ENCODE measurements at regions of chr11 and their contacts with region 1.

Region 1: DNA sequence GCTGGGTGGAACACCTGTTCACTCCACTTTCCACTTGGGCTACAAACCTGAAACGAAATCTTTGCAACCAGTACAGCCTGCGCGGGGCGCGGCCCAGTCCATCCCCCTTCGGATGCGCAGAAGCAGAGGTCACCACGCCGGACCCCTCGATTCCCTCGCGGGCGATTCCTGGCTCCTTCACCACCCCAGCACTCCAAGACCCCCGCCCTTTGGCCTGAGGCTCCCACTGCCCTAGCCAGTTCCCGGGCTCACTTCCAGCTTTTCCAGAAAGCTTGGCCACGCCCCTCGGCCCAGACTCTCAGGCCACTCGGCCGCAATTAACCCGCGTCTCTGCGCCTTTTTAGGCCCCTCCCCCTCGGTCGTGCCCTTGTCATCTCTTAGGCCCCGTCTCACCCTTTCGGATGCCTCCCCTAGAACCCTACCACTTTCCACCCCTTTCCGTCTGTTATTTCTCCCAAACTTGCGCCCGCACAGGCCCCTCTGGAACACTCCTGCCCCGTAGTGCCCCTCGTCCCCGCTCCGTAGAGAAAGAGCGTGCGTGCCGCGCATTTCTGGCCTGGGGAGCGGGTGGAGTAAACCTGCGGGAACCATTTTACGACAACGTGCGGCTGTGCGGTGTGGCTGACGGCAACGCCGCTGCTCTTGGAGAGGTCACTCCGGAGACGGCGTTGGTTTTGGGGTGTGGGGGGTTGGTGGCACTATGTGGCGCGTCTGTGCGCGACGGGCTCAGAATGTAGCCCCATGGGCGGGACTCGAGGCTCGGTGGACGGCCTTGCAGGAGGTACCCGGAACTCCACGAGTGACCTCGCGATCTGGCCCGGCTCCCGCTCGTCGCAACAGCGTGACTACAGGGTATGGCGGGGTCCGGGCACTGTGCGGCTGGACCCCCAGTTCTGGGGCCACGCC is at the start of gene DLAT:
- DNase-seq: peak; percentile 92
- H3K4me3 Mint-ChIP-seq: peak within 1 kb of the TSS; percentile 98
- H3K27ac Mint-ChIP-seq: peak within 1 kb of the TSS; percentile 98
- H3K4me1 Mint-ChIP-seq: peaks cover 21% of the 10 kb centered on the region
- H3K27me3 Mint-ChIP-seq: no peaks in the 10 kb centered on the region
- total RNA-seq, gene DLAT: 36.4 to 39.0 TPM

Region 2: DNA sequence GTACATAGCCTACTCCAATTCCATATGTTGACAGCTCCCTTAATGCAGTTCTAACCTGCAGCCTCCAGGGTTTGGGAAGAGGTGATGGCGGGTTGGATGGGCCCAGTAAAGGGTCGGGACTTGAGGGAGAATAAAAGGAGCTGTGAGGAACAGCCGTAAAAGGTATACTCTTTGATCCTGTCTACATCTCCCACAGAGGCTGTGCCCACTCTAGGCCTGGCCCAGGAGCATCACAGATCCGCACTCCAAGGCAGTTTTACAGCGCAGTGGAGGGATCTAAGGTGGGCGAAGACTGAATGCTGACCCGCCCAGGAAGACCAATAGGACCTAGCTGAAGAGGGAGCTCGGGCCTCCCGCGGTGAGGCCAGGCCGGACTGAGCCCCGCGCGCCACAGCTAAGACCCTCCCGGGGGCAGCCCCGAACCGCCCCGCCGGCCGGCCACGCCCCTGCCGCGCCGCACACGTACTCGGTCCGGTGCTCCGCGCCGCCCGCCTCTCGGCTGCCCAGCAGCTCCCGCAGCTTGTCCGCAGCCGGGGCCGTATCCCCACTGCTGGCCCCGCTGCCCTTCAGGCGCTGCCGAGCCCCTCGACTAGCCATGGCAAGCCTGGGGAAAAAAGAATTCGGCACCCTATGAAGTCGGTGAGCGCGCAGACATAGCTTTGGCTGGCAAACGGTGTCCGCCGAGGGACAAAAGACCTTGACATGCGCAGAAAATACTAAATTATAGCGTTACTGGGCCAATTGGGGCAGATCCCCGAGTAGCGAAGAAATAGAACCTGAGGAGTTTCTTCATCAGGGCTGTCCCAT is 153.9 kb before region 1 on chr11 and contains the start of gene ALG9:
- CTCF ChIA-PET with region 1: no interaction called
- POLR2A ChIA-PET with region 1: no interaction called
- intact Hi-C with region 1: loop called (anchors 2 kb)
- DNase-seq: peak; percentile 92
- H3K4me3 Mint-ChIP-seq: peak within 1 kb of the TSS; percentile 92
- H3K27ac Mint-ChIP-seq: peak within 1 kb of the TSS; percentile 86
- H3K4me1 Mint-ChIP-seq: peaks cover 24% of the 10 kb centered on the region
- H3K27me3 Mint-ChIP-seq: no peaks in the 10 kb centered on the region
- total RNA-seq, gene ALG9: 23.6 to 26.7 TPM

Region 3: GRCh38 chr11:111926505-111927391 is 98.3 kb before region 1 on chr11:
- CTCF ChIA-PET with region 1: interaction called, 3 read pairs
- POLR2A ChIA-PET with region 1: interaction called, 7 read pairs
- intact Hi-C with region 1: loop called (anchors 1 kb)
- DNase-seq: peak; percentile 98
- H3K4me3 Mint-ChIP-seq: peak overlapping the region; percentile 84
- H3K27ac Mint-ChIP-seq: peak overlapping the region; percentile 86
- H3K4me1 Mint-ChIP-seq: peaks cover 13% of the 10 kb centered on the region
- H3K27me3 Mint-ChIP-seq: no peaks in the 10 kb centered on the region

Region 4: DNA sequence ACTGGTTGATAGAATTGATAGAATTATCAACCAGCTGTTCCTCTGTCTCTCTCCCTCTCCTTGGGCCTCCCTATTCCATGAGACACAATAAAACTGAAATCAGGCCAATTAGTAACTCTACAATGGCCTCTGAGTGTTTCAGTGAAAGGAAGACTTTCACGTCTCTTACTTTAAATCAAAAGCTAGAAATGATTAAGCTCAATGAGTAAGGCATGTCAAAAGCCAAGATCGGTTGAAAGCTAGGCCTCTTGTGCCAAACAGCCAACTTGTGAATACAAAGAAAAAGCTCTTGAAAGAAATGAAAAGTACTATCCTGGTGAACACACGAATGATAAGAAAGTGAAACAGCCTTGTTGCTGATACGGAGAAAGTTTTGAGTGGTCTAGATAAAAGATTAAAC is 32.1 kb after region 1 on chr11:
- CTCF ChIA-PET with region 1: no interaction called
- POLR2A ChIA-PET with region 1: interaction called, 4 read pairs
- intact Hi-C with region 1: loop called (anchors 2 kb)
- DNase-seq: peak; percentile 29
- H3K4me3 Mint-ChIP-seq: peak overlapping the region; percentile 33
- H3K27ac Mint-ChIP-seq: peak overlapping the region; percentile 69
- H3K4me1 Mint-ChIP-seq: peaks cover 23% of the 10 kb centered on the region
- H3K27me3 Mint-ChIP-seq: no peaks in the 10 kb centered on the region

Region 5: DNA sequence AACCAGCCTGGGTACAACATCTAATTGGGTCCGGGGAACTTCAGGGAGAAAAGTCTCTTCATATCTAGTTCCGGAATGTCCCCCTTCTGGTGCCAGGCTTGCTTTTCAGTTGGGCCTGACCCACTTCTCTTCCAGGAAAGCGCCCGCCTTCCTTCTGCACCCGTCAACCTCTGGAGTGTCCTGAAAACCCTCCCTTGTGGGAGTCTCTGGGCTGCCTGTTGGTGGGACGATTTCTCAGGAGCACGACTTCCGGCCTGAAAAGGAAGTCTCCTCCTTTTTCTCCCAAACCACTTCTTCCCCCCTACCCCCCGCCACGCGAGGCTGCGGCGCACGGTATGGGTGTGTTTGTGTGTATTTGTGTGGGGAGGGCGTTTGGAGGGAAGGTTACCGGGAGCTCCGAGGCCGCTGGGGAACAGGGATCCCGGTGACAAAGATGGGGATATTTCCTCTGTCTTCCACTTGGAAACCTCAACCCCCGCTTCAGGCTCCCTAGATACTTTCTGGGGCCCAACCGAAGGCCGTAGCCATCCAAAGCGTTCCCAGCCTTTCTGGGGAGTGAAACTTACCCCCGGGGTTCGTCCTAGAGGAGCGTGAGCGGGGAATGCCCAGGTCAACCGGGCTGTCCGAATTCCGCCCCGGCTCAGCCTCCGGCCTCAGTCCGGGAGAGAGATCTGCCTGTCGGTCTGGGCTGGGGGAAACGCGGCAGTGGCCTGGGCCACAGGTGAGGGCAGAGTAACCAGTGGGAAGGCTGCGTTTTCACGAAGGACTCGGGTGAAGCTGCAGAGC is 49.2 kb after region 1 on chr11 and contains the start of gene NKAPD1:
- CTCF ChIA-PET with region 1: interaction called, 3 read pairs
- POLR2A ChIA-PET with region 1: no interaction called
- intact Hi-C with region 1: loop called (anchors 1 kb)
- DNase-seq: peak; percentile 87
- H3K4me3 Mint-ChIP-seq: peak within 1 kb of the TSS; percentile 93
- H3K27ac Mint-ChIP-seq: peak within 1 kb of the TSS; percentile 94
- H3K4me1 Mint-ChIP-seq: peaks cover 29% of the 10 kb centered on the region
- H3K27me3 Mint-ChIP-seq: peaks cover 1% of the 10 kb centered on the region
- total RNA-seq, gene NKAPD1: 17.5 to 19.4 TPM

Region 6: DNA sequence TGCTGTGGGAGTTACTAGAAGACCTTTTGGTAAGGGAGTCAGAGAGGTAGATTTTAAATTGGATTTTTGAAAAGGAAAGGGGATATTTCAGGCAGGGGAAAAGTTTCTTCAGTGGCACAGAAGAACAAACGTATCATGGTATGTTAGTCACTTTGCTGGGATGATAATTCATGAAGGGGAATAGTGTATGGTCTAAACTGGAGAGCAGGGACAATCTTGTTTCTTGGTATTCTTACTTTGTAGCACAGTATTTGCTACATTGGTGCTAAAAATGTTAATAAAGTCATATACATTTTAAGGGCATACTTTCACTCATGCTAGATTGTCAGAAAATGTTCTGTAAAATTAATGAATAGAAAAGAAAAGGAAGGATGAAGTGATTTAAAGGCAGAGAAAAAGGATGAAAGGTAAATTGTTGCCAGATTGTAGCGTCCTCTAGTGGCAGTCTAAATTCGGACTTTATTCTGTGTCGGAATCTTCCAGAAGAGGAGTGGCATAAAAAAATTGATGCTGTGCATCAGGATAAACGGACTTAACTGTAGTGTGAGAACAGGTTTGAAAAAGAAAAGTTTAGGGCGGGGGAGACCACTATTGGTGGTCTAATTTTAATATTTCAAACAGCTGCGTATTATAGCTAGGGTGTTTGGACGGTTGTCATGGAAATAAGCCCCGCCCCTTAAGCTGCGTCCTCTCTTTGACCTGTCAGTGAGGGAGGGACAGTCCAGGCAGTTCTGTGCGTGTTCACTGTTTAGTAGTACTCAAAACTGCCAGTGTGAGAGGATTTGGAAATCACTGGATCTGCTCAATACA is 150.0 kb after region 1 on chr11 and contains the start of gene BCO2:
- CTCF ChIA-PET with region 1: no interaction called
- POLR2A ChIA-PET with region 1: no interaction called
- intact Hi-C with region 1: no loop called
- DNase-seq: peak; percentile 60
- H3K4me3 Mint-ChIP-seq: peak within 1 kb of the TSS; percentile 50
- H3K27ac Mint-ChIP-seq: no peak within 1 kb of the TSS
- H3K4me1 Mint-ChIP-seq: peaks cover 11% of the 10 kb centered on the region
- H3K27me3 Mint-ChIP-seq: peaks cover 16% of the 10 kb centered on the region
- total RNA-seq, gene BCO2: 0.73 to 1.3 TPM

Measured in activated CD4-positive, alpha-beta memory T cell treated with anti-CD3 and anti-CD28 coated beads for 36 hours (primary cell).